ENCODE measurements at regions of chr16 and their contacts with region 1.

Region 1: GRCh38 chr16:12178251-12178990 is 201.9 kb downstream of the SNX29 start:
- DNase-seq: no peak
- H3K4me3 ChIP-seq: no peak overlapping the region
- H3K4me3 Mint-ChIP-seq: no peak overlapping the region
- H3K27ac Mint-ChIP-seq: no peak overlapping the region
- H3K4me1 ChIP-seq: no peaks in the 10 kb centered on the region
- H3K4me1 Mint-ChIP-seq: no peaks in the 10 kb centered on the region
- H3K27me3 ChIP-seq: no peaks in the 10 kb centered on the region
- H3K27me3 Mint-ChIP-seq: no peaks in the 10 kb centered on the region
- CTCF ChIP-seq: no peak

Region 2: DNA sequence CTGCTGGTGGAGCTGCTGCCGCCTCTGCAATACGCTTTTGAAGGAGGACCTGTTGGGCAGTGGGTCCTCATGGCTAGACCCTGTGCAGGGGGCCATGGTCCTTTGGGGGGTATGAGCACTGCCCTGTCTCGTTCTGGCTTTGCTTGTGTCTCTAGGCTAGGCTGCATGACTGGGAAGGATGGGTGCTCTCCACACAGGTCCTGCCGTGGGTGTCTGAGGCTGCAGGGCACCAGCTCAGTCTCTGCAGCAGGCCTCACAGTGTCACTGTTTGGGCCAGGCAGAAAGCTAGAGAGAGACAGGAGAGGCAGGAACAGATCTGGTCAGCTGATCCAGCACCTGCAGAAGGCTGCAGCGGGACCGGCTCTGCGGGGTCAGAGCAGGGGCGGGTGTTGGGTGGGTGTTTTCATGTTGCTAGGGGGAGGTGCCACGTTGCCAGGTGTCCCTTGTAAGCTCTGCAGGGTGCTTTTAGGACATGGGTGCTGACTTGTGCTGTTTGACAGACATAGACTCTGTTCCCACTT is 90.5 kb before region 1 on chr16:
- CTCF ChIA-PET with region 1: no interaction called
- POLR2A ChIA-PET with region 1: no interaction called
- intact Hi-C with region 1: no loop called
- DNase-seq: peak in 1 of 2 experiments; percentile 38
- H3K4me3 ChIP-seq: no peak overlapping the region
- H3K4me3 Mint-ChIP-seq: no peak overlapping the region
- H3K27ac Mint-ChIP-seq: no peak overlapping the region
- H3K4me1 ChIP-seq: peaks cover 3% of the 10 kb centered on the region; the same call in 1 of the 2 replicates
- H3K4me1 Mint-ChIP-seq: peaks cover 7% of the 10 kb centered on the region
- H3K27me3 ChIP-seq: no peaks in the 10 kb centered on the region
- H3K27me3 Mint-ChIP-seq: no peaks in the 10 kb centered on the region
- CTCF ChIP-seq: no peak

Region 3: DNA sequence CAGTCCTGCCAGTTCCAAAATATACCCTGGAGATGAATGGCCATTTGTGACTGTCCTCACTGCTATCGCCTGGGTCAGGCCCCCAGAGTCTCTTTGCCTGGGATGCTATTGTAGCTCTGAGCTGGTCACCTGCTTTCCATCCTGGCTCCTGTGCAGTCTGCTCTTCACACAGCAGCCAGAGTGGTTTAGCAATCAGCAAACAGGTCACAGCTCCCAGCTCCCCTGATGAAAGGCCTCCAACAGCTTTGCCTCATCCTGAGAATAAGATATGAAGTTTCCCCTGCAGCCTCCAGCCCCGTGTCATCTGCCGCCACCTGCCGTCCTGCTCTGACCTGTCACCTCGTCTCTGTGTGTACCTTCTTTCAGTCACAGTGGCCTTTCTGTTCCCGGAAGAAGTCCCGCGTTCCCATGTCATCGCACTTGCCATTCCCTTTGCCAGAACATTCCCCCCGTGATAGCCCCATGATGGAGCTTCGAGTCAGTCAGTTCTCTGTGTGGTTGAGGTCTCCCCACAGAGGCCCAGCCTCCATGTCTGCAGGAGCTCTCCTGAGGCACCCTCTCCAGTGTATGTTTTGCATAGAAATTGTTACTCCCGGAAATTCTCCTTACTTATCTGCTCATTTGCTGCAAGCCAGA is 79.6 kb after region 1 on chr16:
- CTCF ChIA-PET with region 1: interaction called, 12 read pairs
- POLR2A ChIA-PET with region 1: no interaction called
- intact Hi-C with region 1: loop called (anchors 1 kb)
- DNase-seq: peak; percentile 85
- H3K4me3 ChIP-seq: no peak overlapping the region
- H3K4me3 Mint-ChIP-seq: no peak overlapping the region
- H3K27ac Mint-ChIP-seq: peak overlapping the region; percentile 18
- H3K4me1 ChIP-seq: peaks cover 10% of the 10 kb centered on the region; the same call in 1 of the 2 replicates
- H3K4me1 Mint-ChIP-seq: peaks cover 27% of the 10 kb centered on the region
- H3K27me3 ChIP-seq: no peaks in the 10 kb centered on the region
- H3K27me3 Mint-ChIP-seq: no peaks in the 10 kb centered on the region
- CTCF ChIP-seq: peak; percentile 37 to 81

Region 4: DNA sequence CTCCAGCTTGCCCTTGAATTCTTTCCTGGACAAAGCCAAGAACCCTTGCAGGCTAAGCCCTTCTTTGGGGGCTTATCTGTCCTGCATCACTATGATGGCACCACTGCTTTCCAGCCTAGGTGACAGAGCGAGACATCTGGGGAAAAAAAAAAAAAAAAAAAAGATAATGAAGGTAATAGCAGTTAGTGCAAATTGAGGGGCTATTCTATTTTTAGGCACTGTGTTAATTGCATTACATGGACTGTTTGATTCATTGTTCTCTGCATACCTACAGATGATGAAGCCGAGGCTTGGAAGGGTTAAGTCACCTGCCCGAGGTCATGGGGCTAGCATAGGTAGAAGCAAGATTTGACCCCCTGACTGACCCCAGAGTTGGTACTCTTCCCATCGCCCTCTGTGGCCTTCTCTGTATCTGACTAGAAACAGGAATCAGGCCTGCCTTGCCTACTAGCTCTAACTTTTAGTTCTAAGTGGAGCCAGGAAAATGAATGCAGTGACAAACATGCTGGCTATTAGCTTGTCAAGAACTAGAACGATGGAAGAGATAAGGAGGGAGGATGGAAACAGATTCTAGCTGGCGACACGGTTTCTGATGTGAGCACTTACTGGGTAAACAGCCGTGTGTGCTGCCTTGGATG is 110.2 kb after region 1 on chr16:
- CTCF ChIA-PET with region 1: no interaction called
- POLR2A ChIA-PET with region 1: no interaction called
- intact Hi-C with region 1: no loop called
- DNase-seq: no peak
- H3K4me3 ChIP-seq: no peak overlapping the region
- H3K4me3 Mint-ChIP-seq: no peak overlapping the region
- H3K27ac Mint-ChIP-seq: no peak overlapping the region
- H3K4me1 ChIP-seq: no peaks in the 10 kb centered on the region
- H3K4me1 Mint-ChIP-seq: no peaks in the 10 kb centered on the region
- H3K27me3 ChIP-seq: no peaks in the 10 kb centered on the region
- H3K27me3 Mint-ChIP-seq: peaks cover 4% of the 10 kb centered on the region
- CTCF ChIP-seq: no peak

Region 5: GRCh38 chr16:12398029-12398682 is 219.7 kb after region 1 on chr16:
- CTCF ChIA-PET with region 1: no interaction called
- POLR2A ChIA-PET with region 1: no interaction called
- intact Hi-C with region 1: no loop called
- DNase-seq: no peak
- H3K4me3 ChIP-seq: no peak overlapping the region
- H3K4me3 Mint-ChIP-seq: no peak overlapping the region
- H3K27ac Mint-ChIP-seq: no peak overlapping the region
- H3K4me1 ChIP-seq: no peaks in the 10 kb centered on the region
- H3K4me1 Mint-ChIP-seq: no peaks in the 10 kb centered on the region
- H3K27me3 ChIP-seq: no peaks in the 10 kb centered on the region
- H3K27me3 Mint-ChIP-seq: no peaks in the 10 kb centered on the region
- CTCF ChIP-seq: no peak